ENCODE measurements at regions of chr2 and their contacts with region 1.

Region 1: DNA sequence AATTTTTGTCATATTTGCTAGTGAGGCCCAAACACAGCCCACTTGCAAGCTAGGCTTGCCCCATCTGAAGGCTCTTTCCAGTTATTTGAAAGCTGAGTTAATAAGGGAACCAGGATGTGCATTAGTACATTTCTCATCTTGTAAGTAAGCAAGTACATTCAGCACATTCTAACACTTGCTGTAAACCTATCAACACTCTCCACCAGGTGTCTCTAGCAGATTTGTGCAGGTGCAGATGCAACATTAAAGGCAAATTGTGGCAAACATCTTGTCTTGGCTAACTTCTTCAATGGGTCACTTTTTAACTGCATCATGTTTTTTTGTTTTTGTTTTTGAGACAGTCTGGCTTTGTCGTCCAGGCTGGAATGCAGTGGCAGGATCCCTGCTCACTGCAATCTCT is 25.3 kb upstream of the MFSD6 start:
- DNase-seq: peak in 8 of 14 experiments; percentile 8 to 81 (median 39)
- ATAC-seq: peak; percentile 94
- H3K4me3 ChIP-seq: no peak overlapping the region
- H3K4me3 Mint-ChIP-seq: no peak overlapping the region
- H3K27ac ChIP-seq: no peak overlapping the region
- H3K27ac Mint-ChIP-seq: no peak overlapping the region
- H3K4me1 ChIP-seq: no peaks in the 10 kb centered on the region
- H3K4me1 Mint-ChIP-seq: peaks cover 4% of the 10 kb centered on the region
- H3K27me3 ChIP-seq: no peaks in the 10 kb centered on the region
- H3K27me3 Mint-ChIP-seq: no peaks in the 10 kb centered on the region
- CTCF ChIP-seq: peak; percentile 68

Region 2: DNA sequence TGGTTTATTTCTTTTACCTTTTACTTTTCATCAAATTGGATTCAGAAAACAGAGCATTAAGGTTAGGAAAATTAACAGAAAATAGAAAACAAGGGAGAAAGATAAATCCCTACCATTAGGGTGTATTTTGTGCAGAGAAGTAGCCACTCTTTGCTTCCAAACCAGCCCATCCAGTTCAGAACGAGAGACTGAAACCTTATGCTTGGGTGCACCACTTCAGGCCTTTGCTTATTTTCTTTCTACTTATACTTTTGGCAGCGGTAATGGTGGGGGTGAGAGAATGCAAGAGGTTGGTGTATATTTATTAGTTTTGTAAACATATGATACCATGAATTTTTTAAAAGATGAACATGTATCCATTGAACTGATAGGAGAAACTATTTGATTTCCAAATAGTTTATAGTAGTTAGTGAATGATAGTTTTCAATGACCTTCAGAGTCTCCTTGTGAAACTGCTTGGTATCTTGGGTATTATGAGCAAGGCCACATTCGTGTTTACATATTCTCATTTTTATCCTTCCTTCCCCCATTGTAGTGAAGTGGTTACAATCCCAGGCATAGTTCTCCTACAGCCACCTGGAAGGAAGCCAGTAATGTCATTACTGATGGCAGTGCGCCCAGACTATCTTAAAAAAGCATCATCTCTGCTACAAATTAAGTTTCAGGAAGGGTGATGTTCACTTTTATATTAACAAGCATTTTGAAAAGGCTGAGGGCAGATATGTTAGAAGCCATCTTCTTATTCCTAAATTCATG is 86.1 kb after region 1 on chr2:
- CTCF ChIA-PET with region 1: no interaction called
- POLR2A ChIA-PET with region 1: no interaction called
- intact Hi-C with region 1: no loop called
- DNase-seq: no peak
- ATAC-seq: no peak
- H3K4me3 ChIP-seq: no peak overlapping the region
- H3K4me3 Mint-ChIP-seq: no peak overlapping the region
- H3K27ac ChIP-seq: no peak overlapping the region
- H3K27ac Mint-ChIP-seq: peak overlapping the region; percentile 32
- H3K4me1 ChIP-seq: peaks cover 23% of the 10 kb centered on the region
- H3K4me1 Mint-ChIP-seq: peaks cover 65% of the 10 kb centered on the region
- H3K27me3 ChIP-seq: no peaks in the 10 kb centered on the region
- H3K27me3 Mint-ChIP-seq: no peaks in the 10 kb centered on the region
- CTCF ChIP-seq: no peak

Region 3: DNA sequence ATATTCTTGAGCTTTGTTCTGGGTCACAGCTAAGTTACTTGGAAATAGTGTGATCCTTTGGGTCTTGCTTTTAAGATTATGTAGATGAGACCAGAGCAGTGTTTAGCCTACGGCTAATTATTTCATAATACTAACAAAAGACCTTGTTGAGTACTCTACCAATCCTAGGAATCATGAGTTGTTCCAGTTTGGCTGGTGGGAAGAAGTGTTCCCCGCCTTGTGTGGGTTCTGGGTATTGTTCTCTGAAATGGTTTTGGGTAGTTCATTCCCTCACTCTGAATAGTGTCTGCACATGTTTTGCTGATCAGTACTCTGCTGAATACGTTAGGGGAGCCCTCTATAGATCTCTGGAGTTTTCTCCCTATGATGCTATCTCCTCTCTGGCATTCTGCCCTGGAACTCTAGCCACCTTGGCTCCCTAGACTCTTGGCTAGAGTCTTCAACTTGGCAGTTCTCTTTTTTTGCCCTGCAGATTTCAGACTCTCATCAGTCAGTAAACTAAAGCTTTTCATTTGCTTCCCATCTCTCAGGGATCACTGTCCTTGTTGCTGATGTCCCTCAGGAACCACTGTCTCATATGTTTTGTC is 103.3 kb after region 1 on chr2:
- CTCF ChIA-PET with region 1: no interaction called
- POLR2A ChIA-PET with region 1: no interaction called
- intact Hi-C with region 1: loop called in 1 of 2 experiments (anchors 10 kb)
- DNase-seq: no peak
- ATAC-seq: no peak
- H3K4me3 ChIP-seq: no peak overlapping the region
- H3K4me3 Mint-ChIP-seq: no peak overlapping the region
- H3K27ac ChIP-seq: no peak overlapping the region
- H3K27ac Mint-ChIP-seq: peak overlapping the region; percentile 41
- H3K4me1 ChIP-seq: peaks cover 4% of the 10 kb centered on the region
- H3K4me1 Mint-ChIP-seq: peaks cover 47% of the 10 kb centered on the region
- H3K27me3 ChIP-seq: no peaks in the 10 kb centered on the region
- H3K27me3 Mint-ChIP-seq: no peaks in the 10 kb centered on the region
- CTCF ChIP-seq: no peak

Region 4: GRCh38 chr2:190511104-190511503 is 128.3 kb after region 1 on chr2:
- CTCF ChIA-PET with region 1: interaction called, 4 read pairs
- POLR2A ChIA-PET with region 1: no interaction called
- intact Hi-C with region 1: loop called (anchors 1 to 5 kb)
- DNase-seq: no peak
- ATAC-seq: no peak
- H3K4me3 ChIP-seq: no peak overlapping the region
- H3K4me3 Mint-ChIP-seq: no peak overlapping the region
- H3K27ac ChIP-seq: no peak overlapping the region
- H3K27ac Mint-ChIP-seq: no peak overlapping the region
- H3K4me1 ChIP-seq: peaks cover under 1% of the 10 kb centered on the region
- H3K4me1 Mint-ChIP-seq: peaks cover 21% of the 10 kb centered on the region
- H3K27me3 ChIP-seq: no peaks in the 10 kb centered on the region
- H3K27me3 Mint-ChIP-seq: no peaks in the 10 kb centered on the region
- CTCF ChIP-seq: no peak

Region 5: GRCh38 chr2:190679813-190680591 is 297.2 kb after region 1 on chr2:
- CTCF ChIA-PET with region 1: no interaction called
- POLR2A ChIA-PET with region 1: interaction called, 3 read pairs
- intact Hi-C with region 1: loop called (anchors 2 kb)
- DNase-seq: peak; percentile 33 to 81 (median 56)
- ATAC-seq: peak; percentile 73
- H3K4me3 ChIP-seq: no peak overlapping the region
- H3K4me3 Mint-ChIP-seq: no peak overlapping the region
- H3K27ac ChIP-seq: no peak overlapping the region
- H3K27ac Mint-ChIP-seq: peak overlapping the region; percentile 69
- H3K4me1 ChIP-seq: peaks cover 16% of the 10 kb centered on the region
- H3K4me1 Mint-ChIP-seq: peaks cover 46% of the 10 kb centered on the region
- H3K27me3 ChIP-seq: no peaks in the 10 kb centered on the region
- H3K27me3 Mint-ChIP-seq: no peaks in the 10 kb centered on the region
- CTCF ChIP-seq: peak; percentile 74

Region 6: DNA sequence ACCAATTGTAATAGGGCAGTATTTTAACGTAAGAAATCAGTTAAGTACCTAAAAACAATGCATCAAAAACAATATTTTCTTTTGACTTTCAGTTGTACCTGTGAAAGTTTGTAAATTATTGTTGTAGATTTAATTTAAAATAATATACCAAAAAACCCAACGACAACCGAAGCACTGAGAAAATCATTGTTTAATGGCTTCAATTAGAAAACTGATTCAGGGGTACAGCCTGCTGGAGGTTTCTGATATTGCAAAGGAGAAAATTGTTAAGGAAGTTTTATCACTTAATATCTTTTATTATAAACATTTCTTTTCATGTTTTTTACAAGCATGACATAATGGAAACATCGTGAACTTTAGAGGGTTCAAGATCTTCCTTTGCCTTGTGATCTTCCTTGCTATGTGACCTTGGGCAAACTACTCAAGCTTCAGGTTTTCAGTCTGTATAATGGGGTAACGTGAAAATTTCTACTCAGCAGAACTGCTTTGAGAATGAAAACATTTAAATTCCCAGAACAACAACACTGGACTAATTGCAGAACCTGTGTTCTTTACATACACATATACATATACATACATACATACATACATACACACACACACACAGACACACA is 421.4 kb after region 1 on chr2:
- CTCF ChIA-PET with region 1: no interaction called
- POLR2A ChIA-PET with region 1: no interaction called
- intact Hi-C with region 1: loop called (anchors 1 to 2 kb)
- DNase-seq: peak in 4 of 14 experiments; percentile 17 to 31 (median 20)
- ATAC-seq: no peak
- H3K4me3 ChIP-seq: no peak overlapping the region
- H3K4me3 Mint-ChIP-seq: no peak overlapping the region
- H3K27ac ChIP-seq: no peak overlapping the region
- H3K27ac Mint-ChIP-seq: no peak overlapping the region
- H3K4me1 ChIP-seq: no peaks in the 10 kb centered on the region
- H3K4me1 Mint-ChIP-seq: no peaks in the 10 kb centered on the region
- H3K27me3 ChIP-seq: no peaks in the 10 kb centered on the region
- H3K27me3 Mint-ChIP-seq: no peaks in the 10 kb centered on the region
- CTCF ChIP-seq: peak; percentile 55

Measured in CD4-positive, alpha-beta T cell (primary cell).